ENCODE measurements at regions of chr21 and their contacts with region 1.

Region 1: DNA sequence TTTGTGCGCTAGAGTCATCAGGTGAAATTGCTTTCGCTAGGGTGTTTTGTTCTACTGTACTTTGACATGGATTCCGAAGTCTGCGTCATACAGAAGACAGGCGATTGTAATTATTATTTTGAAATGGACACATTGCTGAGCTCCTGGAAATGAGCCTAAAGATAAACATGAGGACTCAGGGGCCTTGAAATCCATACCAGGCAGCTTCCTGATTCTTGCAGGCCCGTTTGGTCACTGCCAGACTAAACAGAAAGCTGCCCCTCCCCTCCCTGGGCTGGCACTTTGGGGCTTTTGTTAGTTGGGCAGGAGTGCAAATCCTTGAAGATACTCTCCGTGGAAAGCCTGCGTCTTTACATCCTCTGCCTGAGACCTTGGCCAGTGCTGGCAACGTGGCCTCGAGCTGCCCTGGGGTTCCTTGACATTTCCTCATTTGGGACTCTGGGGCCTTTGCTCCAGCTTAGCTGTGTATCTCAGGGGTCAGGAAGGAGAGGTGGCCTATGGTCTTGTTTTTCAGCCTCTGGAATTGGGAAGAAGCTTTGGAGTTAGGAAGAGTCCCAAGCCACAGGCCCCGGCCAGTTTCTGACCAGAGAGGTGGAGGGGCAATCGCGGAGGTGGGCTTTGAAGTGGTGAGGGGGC is 26.9 kb upstream of the KCNE2 start:
- DNase-seq: no peak
- ATAC-seq: no peak
- H3K4me3 ChIP-seq: no peak overlapping the region
- H3K4me1 ChIP-seq: no peaks in the 10 kb centered on the region
- CTCF ChIP-seq: no peak

Region 2: DNA sequence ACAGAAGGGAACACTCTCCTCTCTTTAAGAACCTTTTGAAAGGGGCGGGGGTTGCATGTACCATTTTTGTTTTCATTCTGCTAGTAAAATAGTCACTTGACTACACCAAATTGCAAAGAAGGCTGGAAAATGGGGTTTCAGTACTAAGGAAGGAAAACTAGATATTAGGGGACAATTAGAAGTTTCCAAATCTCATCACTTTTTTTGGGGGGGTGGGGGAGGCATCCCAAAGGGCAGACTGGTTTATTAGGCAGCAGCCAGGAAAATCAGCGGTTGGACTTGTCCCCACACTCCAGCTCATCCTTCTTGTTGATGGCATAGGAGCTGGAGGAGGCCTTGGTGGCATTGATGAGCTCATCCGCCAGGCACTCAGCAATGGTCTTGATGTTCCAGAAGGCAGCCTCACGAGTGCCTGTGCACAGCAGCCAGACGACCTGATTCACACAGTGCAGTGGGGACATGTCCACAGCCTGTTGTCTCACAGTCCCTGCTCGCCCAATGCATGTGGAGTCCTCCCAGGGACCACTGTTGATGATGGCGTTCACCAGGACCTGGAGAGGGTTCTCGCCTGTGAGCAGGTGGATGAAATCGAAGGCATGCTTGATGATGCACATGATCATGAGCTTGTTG is 855.4 kb before region 1 on chr21:
- intact Hi-C with region 1: no loop called
- DNase-seq: no peak
- ATAC-seq: no peak
- H3K4me3 ChIP-seq: no peak overlapping the region
- H3K4me1 ChIP-seq: peaks cover 6% of the 10 kb centered on the region
- CTCF ChIP-seq: no peak

Region 3: DNA sequence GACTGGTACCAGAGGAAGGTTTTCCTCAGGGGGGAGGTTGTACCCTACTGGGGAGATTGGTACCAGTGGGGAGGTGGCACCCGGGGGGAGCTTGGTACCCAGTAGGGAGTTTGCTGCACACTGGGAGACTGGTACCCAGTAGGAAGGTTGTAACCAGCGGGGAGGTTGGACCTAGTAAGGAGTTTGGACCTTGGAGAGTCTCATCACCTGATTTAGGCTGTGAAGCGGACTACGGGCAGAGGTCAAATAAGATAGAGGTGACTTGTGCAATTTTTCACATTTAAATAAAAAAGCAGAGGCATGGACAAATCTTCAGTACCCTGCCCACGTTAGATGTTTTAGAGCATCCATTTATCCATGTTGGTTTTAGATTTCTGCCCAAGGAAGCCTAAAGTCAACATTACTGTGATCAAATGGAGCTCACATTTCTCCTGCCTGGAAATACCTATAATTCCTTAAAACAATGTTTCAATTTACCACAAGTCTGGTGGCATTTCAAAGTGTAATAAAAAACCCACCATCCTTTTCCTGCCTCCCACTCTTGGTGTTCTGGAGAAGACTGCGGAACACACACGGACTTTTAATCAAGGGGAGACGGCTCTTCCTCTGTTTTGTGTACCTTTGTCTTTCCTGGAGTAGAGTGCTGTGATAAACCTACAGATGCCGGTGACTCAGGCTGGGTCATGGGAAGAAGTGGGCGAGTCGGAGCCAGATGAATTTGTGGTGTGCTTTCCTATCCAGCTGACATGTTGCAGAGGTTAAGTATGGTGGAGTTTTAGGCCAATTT is 299.7 kb before region 1 on chr21:
- intact Hi-C with region 1: no loop called
- DNase-seq: no peak
- ATAC-seq: no peak
- H3K4me3 ChIP-seq: no peak overlapping the region
- H3K4me1 ChIP-seq: peaks cover 3% of the 10 kb centered on the region
- CTCF ChIP-seq: no peak

Region 4: GRCh38 chr21:34276711-34277425 is 60.0 kb before region 1 on chr21:
- intact Hi-C with region 1: loop called in 1 of 2 experiments (anchors 10 kb)
- DNase-seq: no peak
- ATAC-seq: no peak
- H3K4me3 ChIP-seq: no peak overlapping the region
- H3K4me1 ChIP-seq: no peaks in the 10 kb centered on the region
- CTCF ChIP-seq: no peak

Region 5: DNA sequence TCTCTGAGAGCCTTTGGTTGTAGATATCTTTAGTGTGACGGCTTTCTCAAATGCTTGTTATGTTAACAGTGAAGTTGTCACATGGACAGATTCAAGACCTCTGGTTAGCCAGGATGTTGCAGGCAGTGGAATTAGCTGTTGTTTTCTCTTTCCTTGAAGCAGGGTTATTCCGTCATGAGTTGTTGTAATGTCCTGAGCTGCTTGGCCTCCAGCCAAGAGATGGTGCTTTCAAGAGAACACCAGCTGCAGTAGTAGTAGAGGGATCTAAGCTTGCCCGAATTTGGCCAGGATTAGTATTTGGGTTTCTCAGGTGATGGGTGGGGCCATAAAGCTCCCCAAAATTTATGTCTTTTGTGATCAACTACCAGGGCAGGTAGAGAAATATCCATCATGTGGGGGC is 161.7 kb after region 1 on chr21:
- intact Hi-C with region 1: no loop called
- DNase-seq: no peak
- ATAC-seq: no peak
- H3K4me3 ChIP-seq: no peak overlapping the region
- H3K4me1 ChIP-seq: no peaks in the 10 kb centered on the region
- CTCF ChIP-seq: no peak